ENCODE measurements at regions of chr19 and their contacts with region 1.

Region 1: GRCh38 chr19:7680606-7681339 is at the start of gene TRAPPC5:
- DNase-seq: peak; percentile 86
- H3K4me3 Mint-ChIP-seq: peak within 1 kb of the TSS; percentile 92
- H3K27ac Mint-ChIP-seq: peak within 1 kb of the TSS; percentile 88
- H3K4me1 Mint-ChIP-seq: peaks cover 48% of the 10 kb centered on the region
- H3K27me3 Mint-ChIP-seq: peaks cover 15% of the 10 kb centered on the region
- total RNA-seq, gene TRAPPC5: 74.7 to 82.4 TPM

Region 2: GRCh38 chr19:7562646-7563393 is 118.0 kb before region 1 on chr19:
- CTCF ChIA-PET with region 1: interaction called, 30 read pairs
- intact Hi-C with region 1: loop called (anchors 1 kb)
- DNase-seq: no peak
- H3K4me3 Mint-ChIP-seq: no peak overlapping the region
- H3K27ac Mint-ChIP-seq: no peak overlapping the region
- H3K4me1 Mint-ChIP-seq: no peaks in the 10 kb centered on the region
- H3K27me3 Mint-ChIP-seq: no peaks in the 10 kb centered on the region

Region 3: GRCh38 chr19:7652061-7652641 is 28.6 kb before region 1 on chr19:
- CTCF ChIA-PET with region 1: interaction called, 46 read pairs
- intact Hi-C with region 1: loop called (anchors 1 kb)
- DNase-seq: peak; percentile 92
- H3K4me3 Mint-ChIP-seq: peak overlapping the region; percentile 65
- H3K27ac Mint-ChIP-seq: no peak overlapping the region
- H3K4me1 Mint-ChIP-seq: peaks cover 14% of the 10 kb centered on the region
- H3K27me3 Mint-ChIP-seq: no peaks in the 10 kb centered on the region

Region 4: GRCh38 chr19:7705387-7706187 is 24.8 kb after region 1 on chr19:
- CTCF ChIA-PET with region 1: interaction called, 3 read pairs
- intact Hi-C with region 1: loop called (anchors 1 kb)
- DNase-seq: peak; percentile 94
- H3K4me3 Mint-ChIP-seq: peak overlapping the region; percentile 54
- H3K27ac Mint-ChIP-seq: peak overlapping the region; percentile 67
- H3K4me1 Mint-ChIP-seq: peaks cover 45% of the 10 kb centered on the region
- H3K27me3 Mint-ChIP-seq: no peaks in the 10 kb centered on the region

Region 5: DNA sequence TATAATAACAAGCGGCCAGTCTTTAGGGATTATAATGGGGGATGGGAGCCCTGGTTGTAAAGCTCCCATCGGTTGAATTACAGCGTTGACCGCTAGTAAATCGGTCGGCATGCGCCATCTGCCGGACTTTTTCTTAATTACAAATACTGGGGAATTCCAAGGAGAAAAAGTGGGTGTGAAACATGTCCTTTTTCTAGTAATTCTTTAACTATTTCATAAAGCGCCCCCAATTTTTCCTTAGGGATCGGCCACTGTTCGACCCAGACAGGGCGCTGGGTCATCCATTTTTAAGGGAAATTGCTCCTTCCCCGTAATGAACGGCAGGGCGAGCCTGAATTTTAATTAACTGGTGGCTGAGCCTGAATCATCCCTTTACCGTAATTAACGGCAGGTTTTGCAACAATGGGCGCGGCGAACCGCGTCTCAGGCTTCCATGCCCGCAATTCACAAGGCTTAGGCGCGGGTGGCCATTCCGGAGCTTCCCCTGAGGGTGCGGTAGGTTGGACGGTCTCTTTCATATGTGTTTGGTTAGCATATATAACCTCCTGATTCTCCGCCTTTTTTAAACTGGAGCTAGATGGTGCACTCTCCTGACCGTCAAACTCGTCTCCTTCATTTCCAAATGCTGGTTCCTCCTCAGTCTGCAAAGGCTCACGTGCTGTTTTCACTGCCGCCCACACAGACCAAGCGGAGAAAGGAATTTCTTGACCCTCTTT is 119.0 kb after region 1 on chr19:
- CTCF ChIA-PET with region 1: interaction called, 52 read pairs
- intact Hi-C with region 1: loop called (anchors 1 kb)
- DNase-seq: peak; percentile 76
- H3K4me3 Mint-ChIP-seq: peak overlapping the region; percentile 60
- H3K27ac Mint-ChIP-seq: no peak overlapping the region
- H3K4me1 Mint-ChIP-seq: peaks cover 5% of the 10 kb centered on the region
- H3K27me3 Mint-ChIP-seq: peaks cover 14% of the 10 kb centered on the region

Region 6: GRCh38 chr19:7919610-7920518 is 239.1 kb after region 1 on chr19 and contains the start of gene SNAPC2:
- CTCF ChIA-PET with region 1: interaction called, 3 read pairs
- intact Hi-C with region 1: loop called (anchors 2 kb)
- DNase-seq: peak; percentile 96
- H3K4me3 Mint-ChIP-seq: peak within 1 kb of the TSS; percentile 81
- H3K27ac Mint-ChIP-seq: peak within 1 kb of the TSS; percentile 73
- H3K4me1 Mint-ChIP-seq: peaks cover 38% of the 10 kb centered on the region
- H3K27me3 Mint-ChIP-seq: peaks cover 25% of the 10 kb centered on the region
- total RNA-seq, gene SNAPC2: 10.9 to 12.4 TPM